ENCODE measurements at regions of chr12 and their contacts with region 1.

Region 1: GRCh38 chr12:46268590-46269558 is at the start of gene SLC38A1:
- DNase-seq: peak; percentile 73 to 92 (median 88)
- ATAC-seq: peak; percentile 81
- H3K4me3 ChIP-seq: peak within 1 kb of the TSS; percentile 93
- H3K4me3 Mint-ChIP-seq: no peak within 1 kb of the TSS
- H3K27ac ChIP-seq: peak within 1 kb of the TSS; percentile 98
- H3K27ac Mint-ChIP-seq: no peak within 1 kb of the TSS
- H3K4me1 ChIP-seq: peaks cover 35 to 40% of the 10 kb centered on the region in 2 donors
- H3K4me1 Mint-ChIP-seq: peaks cover 9 to 35% (median 31%) of the 10 kb centered on the region in 7 donors
- H3K27me3 ChIP-seq: no peaks in the 10 kb centered on the region
- H3K27me3 Mint-ChIP-seq: no peaks in the 10 kb centered on the region
- total RNA-seq, gene SLC38A1: 172 to 283 (median 249) TPM

Region 2: DNA sequence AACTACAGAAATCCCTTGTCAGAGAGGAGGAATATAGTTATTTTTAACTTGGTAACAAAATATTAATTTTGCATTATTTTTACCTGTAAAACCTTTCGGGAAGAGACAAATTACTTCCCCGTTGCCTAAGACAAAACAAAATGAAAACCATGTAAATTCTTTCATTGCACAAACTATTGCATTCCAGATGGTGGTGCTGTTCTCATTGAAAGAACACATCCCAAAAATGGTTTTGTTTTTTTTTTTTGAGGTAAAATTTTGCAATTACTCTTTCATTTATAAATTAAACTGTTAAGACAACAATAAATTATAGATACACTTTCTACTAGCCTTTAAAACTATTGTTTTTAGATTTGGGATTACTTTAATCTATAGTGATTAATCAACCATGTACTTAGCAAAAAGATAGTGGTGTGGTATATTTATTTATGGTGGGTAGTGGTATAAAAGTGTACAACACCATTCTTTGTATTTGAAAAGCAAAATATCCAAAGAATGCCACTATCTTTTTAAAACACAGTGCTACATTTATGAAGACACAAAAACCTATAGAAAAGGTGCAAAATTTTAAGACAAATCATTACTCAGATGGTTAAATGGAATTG is 115.5 kb before region 1 on chr12:
- CTCF ChIA-PET with region 1: interaction called, 3 read pairs
- POLR2A ChIA-PET with region 1: interaction called, 12 read pairs
- intact Hi-C with region 1: loop called in 1 of 2 experiments (anchors 10 kb)
- DNase-seq: peak in 6 of 9 donors; percentile 26 to 61 (median 47)
- ATAC-seq: no peak
- H3K4me3 ChIP-seq: no peak overlapping the region
- H3K4me3 Mint-ChIP-seq: peak overlapping the region in 4 of 10 donors; percentile 31 to 52 (median 40)
- H3K27ac ChIP-seq: no peak overlapping the region
- H3K27ac Mint-ChIP-seq: no peak overlapping the region
- H3K4me1 ChIP-seq: peaks cover 0 to 17% of the 10 kb centered on the region in 2 donors
- H3K4me1 Mint-ChIP-seq: peaks cover 3 to 31% (median 13%) of the 10 kb centered on the region in 7 donors
- H3K27me3 ChIP-seq: no peaks in the 10 kb centered on the region
- H3K27me3 Mint-ChIP-seq: peaks cover 0 to 19% (median 4%) of the 10 kb centered on the region in 5 donors

Region 3: GRCh38 chr12:46217541-46218321 is 51.1 kb before region 1 on chr12:
- CTCF ChIA-PET with region 1: interaction called, 17 read pairs
- POLR2A ChIA-PET with region 1: interaction called, 303 read pairs
- intact Hi-C with region 1: loop called (anchors 1 kb)
- DNase-seq: peak in 8 of 9 donors; percentile 58 to 87 (median 84)
- ATAC-seq: peak; percentile 54
- H3K4me3 ChIP-seq: peak overlapping the region; percentile 41
- H3K4me3 Mint-ChIP-seq: peak overlapping the region; percentile 74 to 89 (median 81)
- H3K27ac ChIP-seq: peak overlapping the region; percentile 78
- H3K27ac Mint-ChIP-seq: peak overlapping the region; percentile 89 to 100 (median 99)
- H3K4me1 ChIP-seq: peaks cover 95% of the 10 kb centered on the region in 2 donors
- H3K4me1 Mint-ChIP-seq: peaks cover 69 to 100% (median 98%) of the 10 kb centered on the region in 7 donors
- H3K27me3 ChIP-seq: no peaks in the 10 kb centered on the region
- H3K27me3 Mint-ChIP-seq: no peaks in the 10 kb centered on the region

Region 4: GRCh38 chr12:46303039-46303666 is 34.3 kb after region 1 on chr12:
- CTCF ChIA-PET with region 1: interaction called, 13 read pairs
- POLR2A ChIA-PET with region 1: interaction called, 51 read pairs
- intact Hi-C with region 1: loop called in 1 of 2 experiments (anchors 1 kb)
- DNase-seq: peak in 7 of 9 donors; percentile 40 to 66 (median 57)
- ATAC-seq: peak; percentile 91
- H3K4me3 ChIP-seq: no peak overlapping the region
- H3K4me3 Mint-ChIP-seq: no peak overlapping the region
- H3K27ac ChIP-seq: no peak overlapping the region
- H3K27ac Mint-ChIP-seq: peak overlapping the region in 2 of 9 donors; percentile 1 to 7
- H3K4me1 ChIP-seq: no peaks in the 10 kb centered on the region
- H3K4me1 Mint-ChIP-seq: peaks cover 5 to 20% (median 15%) of the 10 kb centered on the region in 7 donors
- H3K27me3 ChIP-seq: no peaks in the 10 kb centered on the region
- H3K27me3 Mint-ChIP-seq: peaks cover 0 to 22% (median 0%) of the 10 kb centered on the region in 5 donors

Region 5: GRCh38 chr12:46675736-46676135 is 406.9 kb after region 1 on chr12:
- CTCF ChIA-PET with region 1: no interaction called
- POLR2A ChIA-PET with region 1: no interaction called
- intact Hi-C with region 1: loop called in 1 of 2 experiments (anchors 5 kb)
- DNase-seq: peak in 5 of 9 donors; percentile 24 to 38 (median 34)
- ATAC-seq: no peak
- H3K4me3 ChIP-seq: no peak overlapping the region
- H3K4me3 Mint-ChIP-seq: no peak overlapping the region
- H3K27ac ChIP-seq: no peak overlapping the region
- H3K27ac Mint-ChIP-seq: no peak overlapping the region
- H3K4me1 ChIP-seq: no peaks in the 10 kb centered on the region
- H3K4me1 Mint-ChIP-seq: peaks cover 0 to 16% (median 0%) of the 10 kb centered on the region in 7 donors
- H3K27me3 ChIP-seq: no peaks in the 10 kb centered on the region
- H3K27me3 Mint-ChIP-seq: peaks cover 0 to 3% (median 0%) of the 10 kb centered on the region in 5 donors

Measured in naive thymus-derived CD4-positive, alpha-beta T cell (primary cell).